GM10248 (cell line): ENCODE measurements at regions of chr19 and their contacts with region 1.

Region 1: GRCh38 chr19:4232958-4233853 is 3.9 kb downstream of the EBI3 start:
- DNase-seq: peak; percentile 71
- CTCF ChIP-seq: peak; percentile 95

Region 2: GRCh38 chr19:4217429-4218264 is 15.6 kb before region 1 on chr19:
- CTCF ChIA-PET with region 1: interaction called, 15 read pairs
- POLR2A ChIA-PET with region 1: no interaction called
- DNase-seq: no peak
- CTCF ChIP-seq: no peak

Region 3: GRCh38 chr19:4246767-4247593 is 13.8 kb after region 1 on chr19 and contains the start of gene YJU2:
- CTCF ChIA-PET with region 1: interaction called, 35 read pairs
- POLR2A ChIA-PET with region 1: interaction called, 6 read pairs
- DNase-seq: peak; percentile 100
- CTCF ChIP-seq: peak; percentile 58

Region 4: DNA sequence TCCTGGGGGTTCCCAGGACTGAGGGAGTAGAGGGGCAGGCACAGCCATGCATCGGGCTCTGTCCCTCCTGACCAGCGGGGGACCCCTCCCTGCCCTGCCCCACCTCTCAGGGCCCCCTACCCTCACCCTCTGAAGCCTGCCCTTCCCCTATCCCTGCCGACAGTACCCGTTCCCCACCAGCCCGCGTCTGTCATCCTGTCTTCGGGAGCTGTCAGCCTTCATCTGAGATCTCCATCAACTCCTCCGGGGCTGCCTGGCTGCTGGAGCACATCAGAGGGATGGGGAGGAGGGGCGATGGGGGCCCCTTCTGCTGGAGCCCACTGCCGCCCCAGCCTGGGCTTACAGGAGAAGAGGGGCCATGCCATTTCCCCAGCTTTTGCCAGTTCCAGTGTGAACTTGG is 39.7 kb after region 1 on chr19:
- CTCF ChIA-PET with region 1: no interaction called
- POLR2A ChIA-PET with region 1: no interaction called
- DNase-seq: no peak
- CTCF ChIP-seq: no peak